WTC11 (cell line): ENCODE measurements at regions of chr19 and their contacts with region 1.

Region 1: GRCh38 chr19:3275583-3276340 is 51.3 kb downstream of the CELF5 start:
- DNase-seq: peak; percentile 98
- ATAC-seq: peak; percentile 78
- H3K4me3 Mint-ChIP-seq: peak overlapping the region; percentile 83
- H3K27ac Mint-ChIP-seq: peak overlapping the region; percentile 49; the same call in 1 of the 2 replicates
- H3K4me1 Mint-ChIP-seq: peaks cover 16% of the 10 kb centered on the region
- H3K27me3 Mint-ChIP-seq: peaks cover 33% of the 10 kb centered on the region
- CTCF ChIP-seq: peak; percentile 76; the same call in 1 of the 2 replicates

Region 2: GRCh38 chr19:3035542-3036118 is 240.1 kb before region 1 on chr19:
- CTCF ChIA-PET with region 1: interaction called, 10 read pairs
- POLR2A ChIA-PET with region 1: interaction called, 3 read pairs
- DNase-seq: peak; percentile 98
- ATAC-seq: peak; percentile 87
- H3K4me3 Mint-ChIP-seq: peak overlapping the region; percentile 86
- H3K27ac Mint-ChIP-seq: peak overlapping the region; percentile 93
- H3K4me1 Mint-ChIP-seq: peaks cover 27% of the 10 kb centered on the region
- H3K27me3 Mint-ChIP-seq: peaks cover 66% of the 10 kb centered on the region
- CTCF ChIP-seq: no peak

Region 3: DNA sequence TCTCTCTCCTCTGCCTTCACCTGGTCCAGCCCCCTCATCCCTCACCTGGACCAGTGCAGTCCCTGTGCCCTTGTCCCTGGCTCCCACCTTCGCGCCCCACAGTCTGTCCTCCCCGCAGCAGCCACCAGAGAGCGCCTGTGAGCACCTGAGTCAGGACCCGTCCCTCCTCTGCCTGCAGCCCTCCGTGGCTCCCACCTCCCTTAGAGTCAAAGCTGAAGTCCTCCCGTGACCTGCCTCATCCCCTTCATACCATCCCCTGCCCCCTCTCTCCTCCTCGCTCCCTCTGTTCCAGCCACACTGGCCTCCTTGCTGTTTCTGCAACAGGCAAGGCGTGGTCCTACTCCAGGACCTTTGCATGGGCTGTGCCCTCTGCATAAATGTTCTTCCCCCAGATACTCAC is 41.0 kb before region 1 on chr19:
- CTCF ChIA-PET with region 1: interaction called, 30 read pairs
- POLR2A ChIA-PET with region 1: no interaction called
- DNase-seq: peak; percentile 80
- ATAC-seq: peak; percentile 69
- H3K4me3 Mint-ChIP-seq: no peak overlapping the region
- H3K27ac Mint-ChIP-seq: no peak overlapping the region
- H3K4me1 Mint-ChIP-seq: no peaks in the 10 kb centered on the region
- H3K27me3 Mint-ChIP-seq: peaks cover 2% of the 10 kb centered on the region; the same call in 1 of the 2 replicates
- CTCF ChIP-seq: peak; percentile 49; the same call in 1 of the 2 replicates

Region 4: DNA sequence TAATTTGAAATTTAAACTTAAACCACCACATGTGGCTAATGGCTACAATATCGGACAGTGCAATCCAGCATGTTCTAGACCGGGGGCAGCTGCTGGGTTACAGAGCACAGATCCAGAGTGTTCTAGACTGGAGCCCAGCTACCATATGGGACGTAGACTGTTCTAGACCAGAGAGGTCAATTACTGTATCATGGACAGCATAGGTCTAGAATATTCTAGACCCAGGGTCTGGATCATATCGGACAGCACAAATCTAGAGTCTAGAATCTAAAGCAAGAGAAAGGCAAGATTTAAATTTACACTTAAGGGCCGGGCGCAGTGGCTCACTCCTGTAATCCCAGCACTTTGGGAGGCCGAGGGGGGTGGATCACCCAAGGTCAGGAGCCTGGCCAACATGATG is 13.4 kb before region 1 on chr19:
- CTCF ChIA-PET with region 1: interaction called, 12 read pairs
- POLR2A ChIA-PET with region 1: no interaction called
- DNase-seq: no peak
- ATAC-seq: no peak
- H3K4me3 Mint-ChIP-seq: no peak overlapping the region
- H3K27ac Mint-ChIP-seq: no peak overlapping the region
- H3K4me1 Mint-ChIP-seq: no peaks in the 10 kb centered on the region
- H3K27me3 Mint-ChIP-seq: peaks cover 9% of the 10 kb centered on the region
- CTCF ChIP-seq: no peak

Region 5: DNA sequence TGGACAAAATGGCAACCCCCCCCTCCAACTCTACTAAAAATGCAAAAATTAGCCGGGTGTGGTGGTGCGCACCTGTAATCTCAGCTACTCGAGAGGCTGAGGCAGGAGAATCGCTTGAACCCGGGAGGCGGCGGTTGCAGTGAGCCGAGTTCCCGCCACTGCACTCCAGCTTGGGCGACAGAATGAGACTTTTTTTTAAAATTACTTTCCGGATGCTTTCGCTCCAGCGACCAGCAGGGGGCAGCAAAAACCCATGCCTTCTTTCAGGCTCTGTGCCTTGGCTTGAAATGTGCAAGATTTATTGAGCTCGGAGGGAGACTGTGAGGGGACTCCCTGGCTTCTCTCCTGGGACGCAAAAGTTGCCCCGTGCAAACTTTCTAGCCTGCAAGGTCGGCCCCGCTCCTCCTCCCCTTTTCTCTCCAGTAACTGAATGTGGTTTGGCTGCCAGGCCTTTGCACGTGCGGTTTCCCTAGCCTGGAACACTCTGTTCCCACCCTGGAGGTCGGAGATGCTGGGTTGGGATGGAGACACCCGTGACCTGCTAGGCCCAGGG is 29.2 kb after region 1 on chr19:
- CTCF ChIA-PET with region 1: interaction called, 75 read pairs
- POLR2A ChIA-PET with region 1: interaction called, 3 read pairs
- DNase-seq: peak; percentile 81
- ATAC-seq: peak; percentile 57
- H3K4me3 Mint-ChIP-seq: no peak overlapping the region
- H3K27ac Mint-ChIP-seq: no peak overlapping the region
- H3K4me1 Mint-ChIP-seq: no peaks in the 10 kb centered on the region
- H3K27me3 Mint-ChIP-seq: peaks cover 29% of the 10 kb centered on the region
- CTCF ChIP-seq: peak; percentile 76

Region 6: DNA sequence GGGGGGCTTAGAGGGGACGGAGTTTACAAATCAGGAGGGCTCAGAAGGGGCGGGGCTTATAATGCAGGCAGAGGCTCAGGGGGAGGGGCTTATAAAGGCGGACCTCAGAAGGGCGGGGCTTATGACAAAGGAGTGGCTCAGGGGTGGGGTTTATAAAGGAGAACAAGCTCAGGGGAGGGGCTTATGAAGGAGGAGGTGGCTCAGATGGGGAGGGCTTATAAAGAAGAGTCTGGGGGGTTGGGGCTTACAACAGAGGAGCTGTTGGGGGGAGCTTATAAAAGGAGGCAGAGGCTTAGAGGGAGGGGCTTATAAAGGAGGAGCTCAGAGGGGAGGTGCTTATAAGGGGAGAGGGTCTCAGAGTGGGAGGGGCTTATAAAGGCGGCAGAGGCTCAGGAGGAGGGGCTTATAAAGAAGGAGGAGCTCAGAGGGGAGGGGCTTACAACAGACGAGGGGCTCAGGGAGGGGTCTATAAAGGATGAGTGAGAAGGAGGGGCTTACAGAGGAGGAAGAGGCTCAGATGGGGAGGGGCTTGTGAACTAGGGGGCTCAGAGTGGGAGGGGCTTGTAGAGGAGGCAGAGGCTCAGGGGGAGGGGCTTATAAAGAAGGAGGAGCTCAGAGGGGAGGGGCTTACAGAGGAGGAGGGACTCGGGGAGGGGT is 203.5 kb after region 1 on chr19:
- CTCF ChIA-PET with region 1: interaction called, 21 read pairs
- POLR2A ChIA-PET with region 1: no interaction called
- DNase-seq: peak; percentile 79
- ATAC-seq: peak; percentile 47
- H3K4me3 Mint-ChIP-seq: no peak overlapping the region; the same call in 1 of the 2 replicates
- H3K27ac Mint-ChIP-seq: no peak overlapping the region
- H3K4me1 Mint-ChIP-seq: peaks cover 20% of the 10 kb centered on the region
- H3K27me3 Mint-ChIP-seq: peaks cover 6% of the 10 kb centered on the region
- CTCF ChIP-seq: no peak

Region 7: DNA sequence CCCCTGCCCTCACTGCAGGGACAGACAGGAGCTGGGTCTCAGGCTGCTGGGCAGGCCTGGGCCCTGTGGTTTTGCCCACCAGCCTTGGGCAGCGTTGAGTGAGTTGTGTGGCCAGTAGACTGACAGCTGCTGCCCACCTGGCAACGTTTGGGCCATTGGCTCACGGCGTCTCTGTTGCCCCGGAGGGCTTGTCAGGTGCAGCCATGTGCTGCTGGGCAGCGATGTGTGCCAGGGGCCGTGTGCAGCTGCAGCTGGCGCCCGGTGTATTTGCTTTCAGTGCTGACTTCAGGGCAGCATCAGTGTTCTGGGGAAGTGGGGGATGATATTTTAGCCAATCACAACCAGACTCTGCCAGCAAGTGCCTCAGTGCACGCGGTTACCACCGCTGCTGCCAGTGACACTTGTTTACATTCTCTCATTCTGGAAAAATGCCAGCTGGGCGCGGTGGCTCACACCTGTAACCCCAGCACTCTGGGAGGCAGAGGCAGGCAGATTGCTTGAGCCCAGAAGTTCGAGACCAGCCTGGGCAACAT is 241.0 kb after region 1 on chr19:
- CTCF ChIA-PET with region 1: no interaction called
- POLR2A ChIA-PET with region 1: no interaction called
- DNase-seq: no peak
- ATAC-seq: no peak
- H3K4me3 Mint-ChIP-seq: no peak overlapping the region
- H3K27ac Mint-ChIP-seq: peak overlapping the region; percentile 41
- H3K4me1 Mint-ChIP-seq: peaks cover 55% of the 10 kb centered on the region
- H3K27me3 Mint-ChIP-seq: no peaks in the 10 kb centered on the region
- CTCF ChIP-seq: no peak